Endothelial cell of umbilical vein (primary cell): ENCODE measurements at regions of chr17 and their contacts with region 1.

Region 1: GRCh38 chr17:80124351-80124981 is 22.5 kb downstream of the EIF4A3 start:
- DNase-seq: peak; percentile 23
- H3K4me3 ChIP-seq: no peak overlapping the region
- H3K27ac ChIP-seq: no peak overlapping the region
- H3K4me1 ChIP-seq: no peaks in the 10 kb centered on the region
- H3K27me3 ChIP-seq: peaks cover 18 to 19% of the 10 kb centered on the region in 2 experiments
- CTCF ChIP-seq: peak; percentile 25 to 66
- POLR2A ChIP-seq: no peak

Region 2: DNA sequence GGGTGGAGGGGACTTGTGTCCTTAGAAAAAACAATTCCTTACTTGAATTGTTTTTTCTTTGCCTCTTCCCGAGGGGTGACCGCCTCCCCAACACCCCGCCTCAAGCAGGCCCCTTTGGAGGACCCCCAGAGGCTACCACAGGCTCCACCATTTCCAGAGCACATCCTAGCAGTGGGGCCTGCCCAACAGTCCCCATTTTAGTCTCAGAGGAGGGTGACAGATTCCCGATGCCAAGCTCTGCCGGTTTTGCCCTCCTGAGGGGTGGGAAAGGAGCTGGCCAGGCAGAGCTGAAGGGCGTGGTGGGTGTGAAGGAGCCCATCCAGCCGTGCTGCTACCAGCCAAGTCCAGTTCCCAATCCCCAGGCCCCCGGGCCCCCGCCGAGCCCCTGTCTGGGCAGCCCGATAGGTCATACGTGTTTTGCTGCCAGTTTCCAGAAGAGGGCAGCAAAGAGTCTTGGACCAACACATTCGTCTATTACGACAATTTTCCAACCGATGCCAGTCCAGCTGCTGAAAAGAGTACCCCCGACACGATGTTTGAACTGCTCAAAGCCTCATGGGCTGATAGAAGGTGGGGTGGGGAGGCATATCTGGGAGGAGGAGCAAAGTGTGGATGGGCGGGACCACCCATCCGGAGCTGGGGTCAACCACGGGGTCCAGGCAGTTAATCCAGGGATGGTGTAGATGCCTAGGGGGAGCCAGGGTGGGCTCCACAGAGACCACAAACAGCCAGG is 41.9 kb before region 1 on chr17:
- CTCF ChIA-PET with region 1: interaction called, 29 read pairs
- POLR2A ChIA-PET with region 1: no interaction called
- dilution Hi-C with region 1: no loop called
- intact Hi-C with region 1: loop called (anchors 1 kb)
- DNase-seq: peak; percentile 59
- H3K4me3 ChIP-seq: no peak overlapping the region
- H3K27ac ChIP-seq: no peak overlapping the region
- H3K4me1 ChIP-seq: no peaks in the 10 kb centered on the region
- H3K27me3 ChIP-seq: no peaks in the 10 kb centered on the region
- CTCF ChIP-seq: peak; percentile 50 to 84
- POLR2A ChIP-seq: no peak

Region 3: GRCh38 chr17:80113033-80113484 is 11.4 kb before region 1 on chr17:
- CTCF ChIA-PET with region 1: interaction called, 14 read pairs
- POLR2A ChIA-PET with region 1: no interaction called
- dilution Hi-C with region 1: no loop called
- intact Hi-C with region 1: no loop called
- DNase-seq: no peak
- H3K4me3 ChIP-seq: no peak overlapping the region
- H3K27ac ChIP-seq: no peak overlapping the region
- H3K4me1 ChIP-seq: no peaks in the 10 kb centered on the region
- H3K27me3 ChIP-seq: no peaks in the 10 kb centered on the region
- CTCF ChIP-seq: no peak
- POLR2A ChIP-seq: no peak

Region 4: GRCh38 chr17:80160536-80160935 is 36.1 kb after region 1 on chr17:
- CTCF ChIA-PET with region 1: no interaction called
- POLR2A ChIA-PET with region 1: no interaction called
- dilution Hi-C with region 1: no loop called
- intact Hi-C with region 1: no loop called
- DNase-seq: no peak
- H3K4me3 ChIP-seq: no peak overlapping the region
- H3K27ac ChIP-seq: no peak overlapping the region
- H3K4me1 ChIP-seq: no peaks in the 10 kb centered on the region
- H3K27me3 ChIP-seq: peaks cover 8% of the 10 kb centered on the region in 2 experiments
- CTCF ChIP-seq: no peak
- POLR2A ChIP-seq: no peak